Psoas muscle (tissue), 8 donors: ENCODE measurements at regions of chr1 and their contacts with region 1.

Region 1: DNA sequence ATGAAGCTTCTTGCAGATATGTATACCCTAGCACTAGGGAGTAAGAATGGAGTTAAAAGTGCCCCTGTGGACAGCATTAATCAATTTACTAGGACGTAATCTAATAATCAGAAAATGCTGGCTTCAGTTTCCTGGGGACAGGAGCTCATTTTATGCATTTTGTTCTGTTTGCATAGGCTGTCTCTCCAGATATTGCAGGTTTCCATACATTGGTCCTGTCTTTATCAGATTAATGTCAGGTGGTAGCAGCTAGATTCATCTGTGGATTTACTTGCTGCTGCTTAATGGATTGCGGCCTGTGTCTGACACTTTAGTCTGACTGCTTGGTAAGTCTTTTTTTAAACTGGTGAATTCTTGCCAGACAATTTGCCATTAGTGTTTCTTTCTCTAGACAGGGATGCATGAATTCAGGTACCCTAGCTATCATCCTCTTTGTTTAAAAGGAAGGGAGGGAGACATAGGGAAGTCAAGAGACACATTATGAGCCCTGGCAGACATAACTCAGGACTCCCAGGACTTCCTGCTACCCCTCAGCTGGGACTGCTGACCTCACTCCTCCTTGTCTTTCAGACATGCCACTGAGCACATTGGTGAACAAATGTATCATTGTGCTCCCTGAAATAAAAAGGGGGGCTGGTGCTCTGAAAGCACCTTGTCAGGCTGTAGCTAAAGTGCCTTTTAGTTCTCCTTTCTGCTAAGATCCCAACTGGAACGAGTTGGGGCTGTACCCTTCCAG is 47.7 kb downstream of the NOS1AP start:
- DNase-seq: no peak
- ATAC-seq: no peak
- H3K4me3 ChIP-seq: no peak overlapping the region
- H3K27ac ChIP-seq: no peak overlapping the region
- H3K4me1 ChIP-seq: no peaks in the 10 kb centered on the region
- H3K27me3 ChIP-seq: no peaks in the 10 kb centered on the region
- CTCF ChIP-seq: no peak

Region 2: DNA sequence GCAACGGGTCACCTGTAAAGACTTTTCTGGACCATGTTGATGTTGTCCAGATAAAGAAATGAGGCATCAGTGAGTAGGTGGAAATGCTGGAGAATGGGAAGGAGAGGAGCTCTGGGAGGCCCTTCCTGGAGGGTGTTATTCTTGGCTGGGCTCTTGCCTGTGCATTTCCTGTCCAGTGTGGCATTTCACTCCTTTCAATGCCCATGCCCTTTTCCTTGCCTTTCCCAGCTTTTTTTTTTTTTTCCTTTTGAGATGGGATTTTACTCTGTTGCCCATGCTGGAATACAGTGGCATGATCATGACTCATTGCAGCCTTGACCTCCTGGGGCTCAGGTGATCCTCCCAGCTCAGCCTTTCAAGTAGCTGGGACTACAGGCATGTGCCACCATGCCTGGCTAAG is 35.9 kb before region 1 on chr1:
- intact Hi-C with region 1: no loop called
- DNase-seq: no peak
- ATAC-seq: no peak
- H3K4me3 ChIP-seq: no peak overlapping the region
- H3K27ac ChIP-seq: no peak overlapping the region
- H3K4me1 ChIP-seq: no peaks in the 10 kb centered on the region
- H3K27me3 ChIP-seq: peaks cover 0 to 2% (median 0%) of the 10 kb centered on the region in 3 donors
- CTCF ChIP-seq: no peak

Region 3: GRCh38 chr1:162151900-162152829 is 35.0 kb after region 1 on chr1:
- intact Hi-C with region 1: loop called in 1 of 2 experiments (anchors 5 kb)
- DNase-seq: no peak
- ATAC-seq: no peak
- H3K4me3 ChIP-seq: no peak overlapping the region
- H3K27ac ChIP-seq: no peak overlapping the region
- H3K4me1 ChIP-seq: no peaks in the 10 kb centered on the region
- H3K27me3 ChIP-seq: no peaks in the 10 kb centered on the region
- CTCF ChIP-seq: no peak